Tibial artery (tissue), 4 donors: ENCODE measurements at regions of chr1 and their contacts with region 1.

Region 1: GRCh38 chr1:224434691-224435317 is at the start of gene WDR26:
- DNase-seq: peak; percentile 85 to 87
- H3K4me3 ChIP-seq: peak within 1 kb of the TSS; percentile 75 to 92
- H3K27ac ChIP-seq: peak within 1 kb of the TSS; percentile 98 to 100
- H3K4me1 ChIP-seq: peaks cover 0 to 36% (median 29%) of the 10 kb centered on the region in 4 donors
- H3K27me3 ChIP-seq: no peaks in the 10 kb centered on the region
- CTCF ChIP-seq: no peak

Region 2: GRCh38 chr1:224356685-224357625 is 77.8 kb before region 1 on chr1 and contains the start of gene CNIH4:
- intact Hi-C with region 1: loop called (anchors 5 kb)
- DNase-seq: peak; percentile 93 to 94
- H3K4me3 ChIP-seq: peak within 1 kb of the TSS; percentile 85 to 86
- H3K27ac ChIP-seq: peak within 1 kb of the TSS; percentile 94 to 95
- H3K4me1 ChIP-seq: peaks cover 0 to 33% (median 15%) of the 10 kb centered on the region in 4 donors
- H3K27me3 ChIP-seq: no peaks in the 10 kb centered on the region
- CTCF ChIP-seq: no peak